AG04449 (cell line): ENCODE measurements at regions of chr1 and their contacts with region 1.

Region 1: DNA sequence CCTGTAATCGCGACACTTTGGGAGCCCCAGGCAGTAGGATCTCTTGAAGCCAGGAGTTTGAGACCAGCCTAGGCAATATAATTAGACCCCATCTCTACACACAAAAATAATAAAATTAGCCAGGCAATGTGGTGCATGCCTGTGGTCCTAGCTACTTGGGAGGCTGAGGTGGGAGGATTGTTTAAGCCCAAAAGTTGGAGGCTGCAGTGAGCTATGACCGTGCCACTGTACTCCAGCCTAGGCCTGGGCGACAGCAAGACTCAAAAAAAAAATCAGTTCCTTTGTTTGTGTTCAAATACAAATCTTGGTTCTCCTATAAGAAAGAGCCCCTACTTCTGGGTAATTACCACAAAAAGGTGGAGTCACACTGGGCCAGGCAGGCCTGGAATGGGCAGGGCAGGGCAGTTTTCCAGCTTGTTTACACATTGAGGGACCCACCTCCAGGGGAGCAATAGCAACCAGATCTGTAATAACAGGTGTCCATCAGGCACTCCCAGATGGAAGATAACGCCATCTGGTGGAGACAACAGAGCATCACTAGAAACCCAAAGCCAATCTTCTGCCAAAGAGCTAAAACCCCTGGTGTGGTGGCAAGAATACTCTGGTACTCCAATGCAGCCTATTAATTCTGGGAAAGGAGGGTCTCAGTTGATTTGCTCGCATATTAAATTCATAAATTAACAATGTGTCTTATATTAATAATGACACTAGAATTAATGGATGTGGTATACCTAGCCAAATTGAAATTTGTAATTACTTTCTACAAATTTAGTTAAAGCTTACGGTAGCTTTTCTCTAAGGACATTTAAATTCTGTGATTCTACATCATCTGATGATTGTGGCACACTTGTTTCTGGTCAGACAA is 13.2 kb downstream of the PPP1R15B start:
- DNase-seq: no peak
- H3K4me3 ChIP-seq: no peak overlapping the region
- CTCF ChIP-seq: peak; percentile 74

Region 2: GRCh38 chr1:203861379-203862184 is 536.9 kb before region 1 on chr1 and contains the start of gene SNRPE:
- CTCF ChIA-PET with region 1: interaction called, 11 read pairs
- POLR2A ChIA-PET with region 1: no interaction called
- DNase-seq: peak; percentile 82
- H3K4me3 ChIP-seq: peak within 1 kb of the TSS; percentile 100
- CTCF ChIP-seq: peak; percentile 98

Region 3: DNA sequence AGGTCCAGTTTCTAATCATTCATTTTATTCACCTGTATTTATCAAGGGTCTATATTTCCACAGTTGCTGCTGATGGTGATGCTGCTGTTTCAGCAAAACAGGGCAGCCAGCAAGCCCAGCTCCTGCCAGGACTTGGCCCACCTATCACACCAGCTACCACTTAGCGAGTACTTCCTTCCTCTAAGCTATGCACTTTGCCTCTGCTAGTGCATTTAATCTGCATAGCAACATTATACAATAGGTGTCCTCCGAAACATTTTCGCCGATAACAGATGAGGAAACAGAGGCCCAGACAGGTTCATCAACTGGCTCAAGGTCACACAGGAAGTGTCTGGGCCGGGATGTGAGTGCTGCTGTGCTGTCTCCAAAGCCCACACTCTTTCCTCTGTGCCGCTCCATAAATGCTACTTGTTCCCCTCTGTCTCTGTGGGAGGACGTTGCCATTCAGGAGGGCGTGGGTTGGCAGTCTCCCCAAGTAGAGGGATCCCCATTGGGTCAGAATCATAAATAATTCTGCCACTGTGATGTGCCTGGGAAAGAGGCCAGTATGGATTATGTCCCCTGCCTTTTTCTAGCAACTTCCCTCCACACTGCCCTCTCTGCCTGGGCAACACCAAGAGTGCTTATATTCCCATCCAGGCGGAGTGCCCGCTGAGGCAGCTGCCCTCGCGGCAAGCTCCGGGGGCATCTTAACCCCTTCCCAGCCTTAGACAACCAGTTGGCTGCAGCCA is 29.3 kb before region 1 on chr1:
- CTCF ChIA-PET with region 1: interaction called, 31 read pairs
- POLR2A ChIA-PET with region 1: no interaction called
- DNase-seq: no peak
- H3K4me3 ChIP-seq: no peak overlapping the region
- CTCF ChIP-seq: no peak

Region 4: GRCh38 chr1:204384994-204385352 is 13.5 kb before region 1 on chr1:
- CTCF ChIA-PET with region 1: interaction called, 87 read pairs
- POLR2A ChIA-PET with region 1: interaction called, 4 read pairs
- DNase-seq: no peak
- H3K4me3 ChIP-seq: no peak overlapping the region
- CTCF ChIP-seq: no peak

Region 5: DNA sequence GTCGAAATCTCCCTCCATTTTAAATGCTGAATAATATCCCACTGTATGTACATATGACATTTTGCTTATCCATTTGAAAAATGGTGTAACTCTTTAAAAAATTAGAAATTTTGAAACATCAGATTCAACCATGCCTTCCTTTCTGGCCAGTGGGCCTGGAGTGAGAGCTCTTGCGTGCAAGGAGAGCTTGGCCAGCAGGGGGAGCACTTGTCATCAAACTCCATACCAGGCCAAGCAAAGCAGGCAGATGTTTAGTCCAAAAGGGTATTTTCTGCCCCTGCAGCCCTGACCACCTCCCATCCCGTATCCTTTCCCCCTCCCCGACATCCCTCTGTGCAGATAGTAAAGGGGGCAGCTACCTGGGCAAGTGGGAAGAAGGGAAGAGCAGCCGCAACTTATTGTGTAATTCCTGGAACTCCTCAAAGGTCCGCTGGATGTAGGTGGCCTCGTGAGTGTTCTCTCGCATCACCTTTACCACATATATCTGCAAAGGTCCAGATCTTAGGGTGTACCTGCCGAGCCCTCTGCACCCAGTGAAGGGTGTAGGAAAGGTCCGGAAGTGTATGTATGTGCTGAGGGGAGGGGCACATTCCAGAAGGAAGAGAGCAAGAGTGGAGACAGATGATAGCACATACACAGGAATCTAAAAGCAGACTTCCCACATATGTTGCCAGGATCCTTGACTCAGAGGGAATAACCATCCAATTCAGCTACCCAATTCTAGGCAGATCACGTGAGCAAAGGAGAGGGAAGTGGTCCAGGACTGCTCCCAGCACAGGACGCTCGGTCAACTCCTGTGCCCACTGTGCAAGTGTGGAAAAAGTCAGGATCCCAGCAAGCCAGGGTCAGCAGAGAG is 33.1 kb after region 1 on chr1:
- CTCF ChIA-PET with region 1: interaction called, 20 read pairs
- POLR2A ChIA-PET with region 1: no interaction called
- DNase-seq: peak; percentile 46
- H3K4me3 ChIP-seq: no peak overlapping the region
- CTCF ChIP-seq: peak; percentile 85

Region 6: DNA sequence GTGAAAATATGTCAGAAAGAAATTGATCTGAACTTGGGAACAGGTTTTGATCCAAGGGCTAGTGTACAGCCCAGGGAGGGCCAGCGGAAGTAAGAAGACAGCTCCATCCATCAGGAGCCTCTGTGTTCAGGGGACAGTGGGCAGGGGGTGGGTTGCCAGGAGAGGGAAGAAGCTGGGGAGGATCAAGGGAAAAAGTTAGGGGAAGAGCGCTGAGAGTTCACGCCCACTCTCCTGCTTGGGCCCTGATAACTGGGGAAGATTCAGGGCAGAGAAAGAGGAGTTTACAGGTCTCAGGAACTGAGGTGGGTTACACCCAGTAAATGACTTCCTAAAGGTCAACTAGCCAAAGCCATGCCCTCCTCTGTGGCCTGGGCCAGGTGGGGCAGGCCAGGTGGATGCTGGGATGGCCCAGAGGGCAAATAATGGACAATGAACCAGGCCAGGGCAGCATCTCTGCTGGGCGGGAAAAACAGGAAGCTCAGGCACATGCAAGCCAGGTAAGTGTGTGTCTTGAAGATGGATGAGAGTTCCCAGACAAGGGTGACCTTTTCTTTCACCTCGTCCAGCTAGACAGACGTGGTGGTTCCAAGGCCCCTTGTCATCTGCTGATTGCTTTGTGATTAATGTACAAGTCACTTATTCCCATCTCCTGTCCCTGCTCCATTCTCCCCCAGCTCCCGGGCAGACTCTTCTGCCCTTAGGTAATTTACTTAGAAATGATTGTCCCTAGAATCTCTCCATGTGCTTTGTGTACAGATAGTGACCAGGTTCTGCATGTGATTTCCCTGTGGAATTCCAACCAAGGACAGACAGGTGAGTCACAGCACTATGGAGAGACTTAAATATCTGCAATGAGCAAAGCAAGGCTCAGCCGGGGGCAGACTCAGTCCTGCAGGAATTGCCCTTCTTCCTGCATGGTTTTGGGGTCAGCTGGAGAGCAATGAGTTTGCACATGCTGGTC is 174.8 kb after region 1 on chr1:
- CTCF ChIA-PET with region 1: no interaction called
- POLR2A ChIA-PET with region 1: no interaction called
- DNase-seq: no peak
- H3K4me3 ChIP-seq: no peak overlapping the region
- CTCF ChIP-seq: no peak

Region 7: DNA sequence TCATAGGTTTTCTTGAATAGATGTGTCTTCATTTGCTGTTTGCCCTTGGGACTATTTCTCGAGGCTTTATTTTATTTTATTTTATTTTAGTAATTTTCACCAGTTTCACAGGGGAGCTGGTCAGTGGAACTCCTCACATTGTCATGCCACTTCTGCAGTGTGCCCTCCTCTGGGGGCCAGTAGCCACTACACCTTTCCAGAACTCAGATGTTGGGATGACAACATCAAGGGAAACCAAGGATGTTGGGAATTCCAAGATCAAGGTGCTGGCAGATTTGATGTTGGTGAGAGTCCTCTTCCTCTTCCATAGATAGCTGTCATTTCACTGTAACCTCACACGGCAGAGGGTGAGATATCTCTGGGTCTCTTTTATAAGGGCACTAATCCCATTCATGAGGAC is 1509.3 kb after region 1 on chr1:
- CTCF ChIA-PET with region 1: no interaction called
- POLR2A ChIA-PET with region 1: no interaction called
- DNase-seq: no peak
- H3K4me3 ChIP-seq: no peak overlapping the region
- CTCF ChIP-seq: peak; percentile 73